Panc1 (cell line): ENCODE measurements at regions of chr12 and their contacts with region 1.

Region 1: DNA sequence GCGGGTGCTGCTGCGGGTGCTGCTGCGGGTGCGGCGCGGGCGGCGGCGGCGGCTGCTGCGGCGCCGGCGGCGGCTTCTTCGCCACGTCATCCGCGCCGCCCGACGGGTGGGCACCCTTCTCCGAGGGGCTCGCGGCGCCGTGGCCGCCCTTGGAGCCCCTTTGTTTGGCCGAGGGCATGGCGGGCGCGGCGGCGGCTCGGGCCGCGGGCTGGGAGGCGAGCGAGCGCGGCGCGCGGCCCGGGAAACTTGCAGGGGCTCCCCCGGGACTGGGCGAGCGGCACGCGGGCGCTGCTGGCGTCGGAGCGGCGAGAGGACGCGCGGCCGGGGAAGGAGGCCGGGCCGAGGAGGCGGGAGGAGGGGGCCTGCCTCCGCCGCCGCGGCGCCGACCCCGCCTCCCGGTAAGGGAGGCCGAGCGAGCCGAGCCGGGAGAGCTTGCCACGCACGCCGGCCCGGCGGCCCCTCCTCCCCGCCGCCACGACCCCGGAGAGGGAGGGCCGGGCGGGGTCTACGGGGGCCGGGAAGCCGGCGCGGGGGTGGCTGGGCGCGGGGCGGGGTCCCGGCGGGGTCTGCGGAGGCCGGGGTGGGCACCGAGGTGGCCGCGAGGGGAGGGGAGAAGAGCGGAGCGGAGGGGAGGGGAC is at the start of gene CKAP4:
- DNase-seq: no peak
- ATAC-seq: peak; percentile 86
- H3K4me3 ChIP-seq: peak within 1 kb of the TSS; percentile 63 to 74
- H3K27ac ChIP-seq: peak within 1 kb of the TSS; percentile 74
- H3K4me1 ChIP-seq: peaks cover 4% of the 10 kb centered on the region; the same call in 1 of the 2 replicates
- H3K27me3 ChIP-seq: no peaks in the 10 kb centered on the region
- CTCF ChIP-seq: no peak
- total RNA-seq, gene CKAP4: 95.9 TPM

Region 2: GRCh38 chr12:106084014-106084671 is 163.7 kb before region 1 on chr12:
- CTCF ChIA-PET with region 1: no interaction called
- POLR2A ChIA-PET with region 1: no interaction called
- in situ Hi-C with region 1: no loop called
- intact Hi-C with region 1: loop called (anchors 5 kb)
- DNase-seq: no peak
- ATAC-seq: peak; percentile 90
- H3K4me3 ChIP-seq: no peak overlapping the region
- H3K27ac ChIP-seq: peak overlapping the region; percentile 88
- H3K4me1 ChIP-seq: peaks cover 47% of the 10 kb centered on the region
- H3K27me3 ChIP-seq: no peaks in the 10 kb centered on the region
- CTCF ChIP-seq: no peak

Region 3: GRCh38 chr12:106417926-106418910 is 170.4 kb after region 1 on chr12:
- CTCF ChIA-PET with region 1: no interaction called
- POLR2A ChIA-PET with region 1: no interaction called
- in situ Hi-C with region 1: no loop called
- intact Hi-C with region 1: no loop called
- DNase-seq: no peak
- ATAC-seq: 0 out of 2 replicates have a peak, but pooled peaks have one; percentile 65
- H3K4me3 ChIP-seq: no peak overlapping the region
- H3K27ac ChIP-seq: no peak overlapping the region
- H3K4me1 ChIP-seq: no peaks in the 10 kb centered on the region
- H3K27me3 ChIP-seq: no peaks in the 10 kb centered on the region
- CTCF ChIP-seq: no peak

Region 4: GRCh38 chr12:107125833-107126232 is 878.0 kb after region 1 on chr12:
- CTCF ChIA-PET with region 1: no interaction called
- POLR2A ChIA-PET with region 1: interaction called, 11 read pairs
- in situ Hi-C with region 1: no loop called
- intact Hi-C with region 1: no loop called
- DNase-seq: no peak
- ATAC-seq: no peak
- H3K4me3 ChIP-seq: no peak overlapping the region
- H3K27ac ChIP-seq: no peak overlapping the region
- H3K4me1 ChIP-seq: no peaks in the 10 kb centered on the region
- H3K27me3 ChIP-seq: peaks cover 15% of the 10 kb centered on the region
- CTCF ChIP-seq: no peak

Region 5: GRCh38 chr12:107328442-107329133 is 1080.8 kb after region 1 on chr12:
- CTCF ChIA-PET with region 1: no interaction called
- POLR2A ChIA-PET with region 1: no interaction called
- in situ Hi-C with region 1: no loop called
- intact Hi-C with region 1: no loop called
- DNase-seq: no peak
- ATAC-seq: no peak
- H3K4me3 ChIP-seq: no peak overlapping the region
- H3K27ac ChIP-seq: no peak overlapping the region
- H3K4me1 ChIP-seq: no peaks in the 10 kb centered on the region
- H3K27me3 ChIP-seq: peaks cover 9% of the 10 kb centered on the region
- CTCF ChIP-seq: no peak